Calu3 (cell line): ENCODE measurements at regions of chr18 and their contacts with region 1.

Region 1: DNA sequence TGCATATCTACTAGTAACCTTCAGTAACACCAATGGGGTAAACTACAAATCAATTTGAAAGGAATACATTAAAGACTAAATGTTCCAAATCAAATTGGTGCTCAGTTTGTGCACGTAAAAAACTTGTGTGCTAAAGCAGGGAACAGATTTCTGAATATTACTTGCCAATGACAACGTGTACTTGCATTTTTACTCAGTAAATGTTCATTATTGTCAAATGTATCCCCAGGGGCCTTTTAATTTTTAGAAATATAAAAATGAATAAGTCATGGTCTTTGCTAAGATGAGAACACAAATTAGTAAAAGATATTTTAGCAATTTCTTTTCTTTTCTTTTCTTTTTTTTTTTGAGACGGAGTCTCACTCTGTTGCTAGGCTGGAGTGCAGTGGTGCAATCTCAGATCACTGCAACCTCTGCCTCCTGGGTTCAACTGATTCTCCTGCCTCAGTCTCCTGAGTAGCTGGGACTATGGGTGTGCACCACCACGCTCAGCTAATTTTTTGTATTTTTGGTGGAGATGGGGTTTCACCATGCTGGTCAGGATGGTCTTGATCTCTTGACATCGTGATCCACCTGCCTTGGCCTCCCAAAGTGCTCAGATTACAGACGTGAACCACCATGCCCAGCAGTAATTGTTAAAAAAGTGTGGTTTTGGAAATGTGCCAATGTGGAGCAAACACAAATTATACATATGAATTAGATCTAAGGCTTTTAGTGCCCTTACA is 52.6 kb downstream of the PMAIP1 start:
- DNase-seq: no peak
- H3K4me3 Mint-ChIP-seq: peak overlapping the region; percentile 17
- H3K27ac Mint-ChIP-seq: peak overlapping the region; percentile 85
- H3K4me1 Mint-ChIP-seq: peaks cover 54% of the 10 kb centered on the region
- H3K27me3 Mint-ChIP-seq: no peaks in the 10 kb centered on the region
- CTCF ChIP-seq: no peak

Region 2: GRCh38 chr18:59899298-59900221 is 52.9 kb before region 1 on chr18 and contains the start of gene PMAIP1:
- CTCF ChIA-PET with region 1: interaction called, 5 read pairs
- intact Hi-C with region 1: loop called (anchors 1 kb)
- DNase-seq: peak; percentile 92
- H3K4me3 Mint-ChIP-seq: peak within 1 kb of the TSS; percentile 92
- H3K27ac Mint-ChIP-seq: peak within 1 kb of the TSS; percentile 98
- H3K4me1 Mint-ChIP-seq: peaks cover 24% of the 10 kb centered on the region
- H3K27me3 Mint-ChIP-seq: no peaks in the 10 kb centered on the region
- CTCF ChIP-seq: no peak
- total RNA-seq, gene PMAIP1: 56.1 and 75.4 TPM in 2 replicates